MCF 10A (cell line): ENCODE measurements at regions of chr1 and their contacts with region 1.

Region 1: DNA sequence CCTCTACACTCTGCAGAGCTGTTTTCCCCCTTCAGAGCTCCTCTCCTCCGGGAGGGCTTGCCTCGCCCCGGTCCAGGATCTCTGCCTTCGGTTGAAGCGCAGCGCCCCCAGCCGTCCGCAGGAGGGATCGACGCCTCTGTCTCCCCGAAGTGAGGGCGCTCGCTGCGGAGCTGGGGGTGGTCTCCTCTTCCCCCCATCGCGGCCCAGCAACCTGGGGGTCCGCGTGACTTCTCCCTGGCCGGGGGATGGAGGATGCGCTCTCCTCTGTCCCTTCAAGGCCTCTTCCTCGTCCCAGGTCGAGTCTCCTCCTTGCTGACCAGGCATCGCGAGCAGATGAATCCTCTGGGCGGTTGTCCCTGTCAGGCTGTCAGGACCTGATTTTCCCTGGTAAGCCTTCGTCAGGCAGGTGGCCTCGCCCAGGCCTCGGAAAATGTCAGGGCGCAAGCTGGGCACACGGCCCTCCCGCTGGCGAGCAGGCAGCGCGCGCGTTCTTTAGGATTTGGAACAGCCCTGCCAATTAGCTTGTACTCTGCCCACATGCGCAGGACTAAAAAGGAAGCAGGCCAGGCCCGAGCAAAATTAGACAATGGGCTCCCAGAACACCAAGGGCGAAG is 90.5 kb downstream of the EDEM3 start:
- DNase-seq: peak; percentile 79
- H3K4me3 Mint-ChIP-seq: peak overlapping the region; percentile 74
- H3K27ac Mint-ChIP-seq: peak overlapping the region; percentile 67
- H3K4me1 Mint-ChIP-seq: peaks cover 29% of the 10 kb centered on the region
- H3K27me3 Mint-ChIP-seq: no peaks in the 10 kb centered on the region
- CTCF ChIP-seq: peak; percentile 99

Region 2: GRCh38 chr1:184075055-184076029 is 588.8 kb before region 1 on chr1:
- CTCF ChIA-PET with region 1: interaction called, 28 read pairs
- POLR2A ChIA-PET with region 1: interaction called, 3 read pairs
- intact Hi-C with region 1: loop called (anchors 1 kb)
- DNase-seq: peak; percentile 72
- H3K4me3 Mint-ChIP-seq: no peak overlapping the region
- H3K27ac Mint-ChIP-seq: no peak overlapping the region
- H3K4me1 Mint-ChIP-seq: no peaks in the 10 kb centered on the region
- H3K27me3 Mint-ChIP-seq: no peaks in the 10 kb centered on the region
- CTCF ChIP-seq: peak; percentile 90

Region 3: GRCh38 chr1:184242507-184242943 is 421.6 kb before region 1 on chr1:
- CTCF ChIA-PET with region 1: interaction called, 16 read pairs
- POLR2A ChIA-PET with region 1: no interaction called
- intact Hi-C with region 1: loop called (anchors 1 kb)
- DNase-seq: peak; percentile 40
- H3K4me3 Mint-ChIP-seq: no peak overlapping the region
- H3K27ac Mint-ChIP-seq: peak overlapping the region; percentile 1
- H3K4me1 Mint-ChIP-seq: no peaks in the 10 kb centered on the region
- H3K27me3 Mint-ChIP-seq: no peaks in the 10 kb centered on the region
- CTCF ChIP-seq: no peak

Region 4: GRCh38 chr1:184563308-184563707 is 100.8 kb before region 1 on chr1:
- CTCF ChIA-PET with region 1: interaction called, 6 read pairs
- POLR2A ChIA-PET with region 1: interaction called, 3 read pairs
- intact Hi-C with region 1: loop called (anchors 2 kb)
- DNase-seq: peak; percentile 56
- H3K4me3 Mint-ChIP-seq: no peak overlapping the region
- H3K27ac Mint-ChIP-seq: no peak overlapping the region
- H3K4me1 Mint-ChIP-seq: peaks cover 32% of the 10 kb centered on the region
- H3K27me3 Mint-ChIP-seq: no peaks in the 10 kb centered on the region
- CTCF ChIP-seq: peak; percentile 57

Region 5: DNA sequence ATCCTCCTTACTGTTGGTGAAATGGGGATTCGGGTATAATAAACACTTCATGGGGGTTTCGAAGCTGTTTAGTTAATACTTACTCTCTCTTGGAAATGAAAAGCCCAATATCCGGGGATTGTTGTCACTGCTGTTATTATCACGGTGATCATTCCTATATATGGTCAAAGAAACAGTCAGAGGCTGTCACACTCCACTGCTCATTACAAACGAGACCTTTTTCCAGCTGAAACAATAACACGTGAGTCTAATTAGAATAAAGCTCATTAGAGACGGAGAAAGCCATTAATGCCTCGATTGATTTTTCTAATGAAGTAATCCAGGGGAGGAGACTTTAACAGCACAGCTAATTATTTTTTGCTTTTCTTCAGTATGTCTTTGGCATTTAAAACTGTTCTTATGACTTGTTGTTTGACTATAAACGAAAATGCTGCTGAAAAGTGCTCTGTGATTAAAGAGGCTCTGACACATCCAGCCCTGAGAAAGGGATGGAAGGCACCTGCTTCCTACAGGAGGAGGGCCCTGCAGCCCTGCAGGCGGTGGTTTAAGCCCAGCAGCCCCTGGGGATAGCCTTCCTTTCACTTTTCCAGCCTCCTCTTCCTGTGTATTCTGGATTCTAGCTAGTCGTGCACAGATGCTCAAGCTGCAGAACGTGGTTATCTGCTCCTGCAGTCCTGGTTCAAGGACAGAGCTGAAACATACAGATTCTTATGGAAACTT is 53.1 kb before region 1 on chr1:
- CTCF ChIA-PET with region 1: interaction called, 13 read pairs
- POLR2A ChIA-PET with region 1: interaction called, 4 read pairs
- intact Hi-C with region 1: no loop called
- DNase-seq: no peak
- H3K4me3 Mint-ChIP-seq: no peak overlapping the region
- H3K27ac Mint-ChIP-seq: peak overlapping the region; percentile 95
- H3K4me1 Mint-ChIP-seq: peaks cover 23% of the 10 kb centered on the region
- H3K27me3 Mint-ChIP-seq: no peaks in the 10 kb centered on the region
- CTCF ChIP-seq: no peak

Region 6: GRCh38 chr1:184632415-184633175 is 31.6 kb before region 1 on chr1:
- CTCF ChIA-PET with region 1: interaction called, 14 read pairs
- POLR2A ChIA-PET with region 1: interaction called, 14 read pairs
- intact Hi-C with region 1: no loop called
- DNase-seq: peak; percentile 95
- H3K4me3 Mint-ChIP-seq: peak overlapping the region; percentile 4
- H3K27ac Mint-ChIP-seq: peak overlapping the region; percentile 86
- H3K4me1 Mint-ChIP-seq: peaks cover 64% of the 10 kb centered on the region
- H3K27me3 Mint-ChIP-seq: no peaks in the 10 kb centered on the region
- CTCF ChIP-seq: no peak

Region 7: DNA sequence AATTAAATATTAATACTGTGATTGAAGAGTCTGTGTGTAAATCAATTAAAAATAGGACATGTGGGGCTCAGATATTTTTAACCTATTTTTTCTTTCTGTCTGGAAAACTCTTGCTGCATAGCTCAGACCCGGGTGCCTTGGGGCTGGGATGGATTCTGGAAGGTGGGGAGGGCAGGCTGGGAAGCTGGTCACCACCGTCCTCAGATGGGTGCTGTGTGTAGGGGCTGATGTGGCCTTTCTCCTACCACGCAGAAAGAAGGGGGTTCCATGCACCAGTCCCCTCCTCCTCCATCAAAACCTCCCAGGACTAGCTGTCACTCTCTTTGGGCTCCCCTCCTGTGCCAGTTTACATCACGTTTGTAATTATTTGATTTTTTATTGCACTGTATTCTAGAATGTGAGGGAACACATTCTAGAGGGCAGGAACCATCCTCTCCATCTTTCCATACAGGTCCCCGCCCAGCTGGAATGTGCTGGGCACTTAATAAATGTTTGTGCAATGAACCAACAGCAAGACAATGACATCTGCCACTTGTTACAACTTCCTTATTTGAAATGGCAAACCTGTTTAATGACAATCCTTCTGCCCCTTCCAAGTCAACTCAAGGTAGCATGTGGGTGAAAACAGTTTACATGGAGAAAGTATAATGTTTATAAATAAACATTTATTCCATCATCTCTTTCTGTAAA is 13.8 kb before region 1 on chr1:
- CTCF ChIA-PET with region 1: interaction called, 49 read pairs
- POLR2A ChIA-PET with region 1: interaction called, 4 read pairs
- intact Hi-C with region 1: no loop called
- DNase-seq: no peak
- H3K4me3 Mint-ChIP-seq: no peak overlapping the region
- H3K27ac Mint-ChIP-seq: no peak overlapping the region
- H3K4me1 Mint-ChIP-seq: peaks cover 6% of the 10 kb centered on the region
- H3K27me3 Mint-ChIP-seq: no peaks in the 10 kb centered on the region
- CTCF ChIP-seq: no peak

Region 8: GRCh38 chr1:184734980-184735379 is 70.8 kb after region 1 on chr1:
- CTCF ChIA-PET with region 1: no interaction called
- POLR2A ChIA-PET with region 1: no interaction called
- intact Hi-C with region 1: no loop called
- DNase-seq: no peak
- H3K4me3 Mint-ChIP-seq: no peak overlapping the region
- H3K27ac Mint-ChIP-seq: no peak overlapping the region
- H3K4me1 Mint-ChIP-seq: no peaks in the 10 kb centered on the region
- H3K27me3 Mint-ChIP-seq: no peaks in the 10 kb centered on the region
- CTCF ChIP-seq: no peak